MCF 10A (cell line): ENCODE measurements at regions of chr3 and their contacts with region 1.

Region 1: GRCh38 chr3:122793568-122794416 is at the start of gene HSPBAP1:
- DNase-seq: peak; percentile 97
- H3K4me3 Mint-ChIP-seq: no peak within 1 kb of the TSS
- H3K27ac Mint-ChIP-seq: peak within 1 kb of the TSS; percentile 97
- H3K4me1 Mint-ChIP-seq: peaks cover 14% of the 10 kb centered on the region
- H3K27me3 Mint-ChIP-seq: no peaks in the 10 kb centered on the region
- CTCF ChIP-seq: no peak
- total RNA-seq, gene HSPBAP1: 11.3 and 15.2 TPM in 2 replicates

Region 2: DNA sequence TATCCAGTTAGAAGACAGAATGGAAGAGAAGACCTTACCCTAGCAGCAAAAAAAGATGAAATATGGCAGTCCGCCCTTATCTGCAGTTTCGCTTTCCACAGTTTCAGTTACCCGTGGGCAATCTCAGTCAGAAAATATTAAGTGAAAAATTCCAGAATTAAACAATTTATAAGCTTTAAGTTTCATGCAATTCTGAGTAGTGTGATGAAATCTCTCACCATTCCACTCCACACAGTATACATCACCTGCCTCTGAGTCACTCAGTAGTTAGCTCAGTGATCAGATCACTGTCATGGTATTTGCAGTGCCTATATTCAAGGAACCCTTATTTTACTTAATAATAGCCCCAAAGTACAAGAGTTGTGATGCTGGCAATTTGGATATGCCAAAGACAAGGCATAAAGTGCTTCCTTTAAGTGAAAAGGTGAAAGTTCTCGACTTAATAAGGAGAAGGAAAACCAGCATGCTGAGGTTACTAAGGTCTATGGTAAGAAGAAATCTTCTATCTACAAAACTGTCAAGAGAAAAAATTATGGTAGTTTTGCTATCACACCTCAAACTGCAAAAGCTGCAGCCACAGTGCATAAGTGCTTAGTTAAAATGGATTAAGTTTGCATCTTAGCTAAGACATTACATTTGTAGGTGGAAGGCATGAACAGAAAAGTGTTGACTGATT is 48.3 kb before region 1 on chr3:
- CTCF ChIA-PET with region 1: no interaction called
- POLR2A ChIA-PET with region 1: interaction called, 11 read pairs
- intact Hi-C with region 1: no loop called
- DNase-seq: peak; percentile 59
- H3K4me3 Mint-ChIP-seq: peak overlapping the region; percentile 21
- H3K27ac Mint-ChIP-seq: peak overlapping the region; percentile 79
- H3K4me1 Mint-ChIP-seq: peaks cover 7% of the 10 kb centered on the region
- H3K27me3 Mint-ChIP-seq: no peaks in the 10 kb centered on the region
- CTCF ChIP-seq: no peak

Region 3: DNA sequence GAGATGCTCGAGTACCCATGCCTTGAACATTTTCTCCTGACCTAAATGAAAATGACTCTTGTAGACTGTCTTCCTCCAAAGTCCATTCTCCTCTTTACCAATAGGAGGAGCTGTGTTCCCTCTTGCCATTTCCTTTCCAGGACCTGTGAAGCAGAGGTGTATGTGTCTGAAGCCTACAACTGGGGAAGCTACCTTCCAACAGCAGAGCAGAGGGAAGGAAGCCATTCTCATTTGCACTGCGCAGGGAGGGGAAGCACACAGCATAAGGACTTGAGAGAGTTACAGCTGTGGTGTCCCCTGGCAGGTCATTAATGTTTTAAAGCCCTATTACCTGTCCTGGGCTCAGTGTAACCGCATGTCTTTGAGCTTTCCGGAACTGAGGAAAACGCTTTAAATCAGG is 38.9 kb before region 1 on chr3:
- CTCF ChIA-PET with region 1: interaction called, 9 read pairs
- POLR2A ChIA-PET with region 1: interaction called, 8 read pairs
- intact Hi-C with region 1: loop called (anchors 2 kb)
- DNase-seq: peak; percentile 74
- H3K4me3 Mint-ChIP-seq: no peak overlapping the region
- H3K27ac Mint-ChIP-seq: no peak overlapping the region
- H3K4me1 Mint-ChIP-seq: no peaks in the 10 kb centered on the region
- H3K27me3 Mint-ChIP-seq: no peaks in the 10 kb centered on the region
- CTCF ChIP-seq: peak; percentile 64